ENCODE measurements at regions of chr5 and their contacts with region 1.

Region 1: DNA sequence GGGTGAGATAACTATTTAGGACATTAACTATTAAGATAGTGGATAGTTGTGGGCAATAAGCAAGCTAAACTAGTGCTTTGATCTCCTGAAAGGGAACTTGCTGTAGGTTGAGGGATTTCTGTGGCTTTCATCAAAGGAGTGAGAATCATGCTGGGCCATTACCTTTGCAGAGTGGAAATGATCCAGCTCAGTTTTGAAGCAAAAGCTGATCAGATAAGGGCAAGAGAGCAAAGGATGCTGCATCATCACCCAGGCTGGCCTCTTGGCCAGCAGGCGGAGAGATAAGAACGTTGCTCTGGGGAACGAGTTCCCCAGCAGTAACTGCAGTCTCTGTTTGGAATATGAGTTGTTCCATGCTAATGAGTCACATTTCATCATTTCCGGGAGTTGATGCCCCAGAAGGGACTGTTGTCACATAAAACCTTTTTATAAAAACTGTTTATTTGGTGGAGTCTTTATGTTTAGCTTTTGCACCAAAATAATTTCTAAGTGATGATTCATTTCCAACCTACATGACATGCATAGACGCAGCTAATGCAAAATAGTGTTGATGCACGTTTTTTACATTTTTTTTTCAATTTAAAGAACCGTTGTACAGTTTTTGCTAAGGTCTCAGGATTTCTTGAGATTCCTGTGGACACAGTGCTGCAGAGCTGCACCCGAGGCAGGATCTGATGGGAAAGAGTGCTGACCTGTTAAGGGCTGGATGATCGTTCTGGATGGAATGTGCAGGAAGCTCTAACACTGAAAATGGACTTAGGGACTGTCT is 99.3 kb downstream of the ACTBL2 start:
- DNase-seq: peak; percentile 87
- ATAC-seq: peak; percentile 95
- H3K4me3 ChIP-seq: peak overlapping the region; percentile 50; the same call in 1 of the 2 replicates
- H3K27ac ChIP-seq: peak overlapping the region; percentile 89
- H3K4me1 ChIP-seq: peaks cover 14% of the 10 kb centered on the region
- H3K27me3 ChIP-seq: no peaks in the 10 kb centered on the region
- CTCF ChIP-seq: peak; percentile 47

Region 2: GRCh38 chr5:57338068-57338892 is 45.0 kb before region 1 on chr5:
- CTCF ChIA-PET with region 1: interaction called, 5 read pairs
- POLR2A ChIA-PET with region 1: no interaction called
- intact Hi-C with region 1: loop called (anchors 1 kb)
- DNase-seq: peak; percentile 62
- ATAC-seq: peak; percentile 67
- H3K4me3 ChIP-seq: no peak overlapping the region
- H3K27ac ChIP-seq: peak overlapping the region; percentile 67
- H3K4me1 ChIP-seq: peaks cover 49% of the 10 kb centered on the region
- H3K27me3 ChIP-seq: no peaks in the 10 kb centered on the region
- CTCF ChIP-seq: peak; percentile 59

Region 3: GRCh38 chr5:57358796-57359592 is 24.3 kb before region 1 on chr5:
- CTCF ChIA-PET with region 1: no interaction called
- POLR2A ChIA-PET with region 1: no interaction called
- intact Hi-C with region 1: no loop called
- DNase-seq: no peak
- ATAC-seq: no peak
- H3K4me3 ChIP-seq: no peak overlapping the region
- H3K27ac ChIP-seq: no peak overlapping the region
- H3K4me1 ChIP-seq: no peaks in the 10 kb centered on the region
- H3K27me3 ChIP-seq: no peaks in the 10 kb centered on the region
- CTCF ChIP-seq: no peak

Region 4: GRCh38 chr5:57499262-57500050 is 116.2 kb after region 1 on chr5:
- CTCF ChIA-PET with region 1: no interaction called
- POLR2A ChIA-PET with region 1: no interaction called
- intact Hi-C with region 1: loop called (anchors 2 kb)
- DNase-seq: peak; percentile 71
- ATAC-seq: peak; percentile 41; the same call in 1 of the 2 replicates
- H3K4me3 ChIP-seq: peak overlapping the region; percentile 19; the same call in 1 of the 2 replicates
- H3K27ac ChIP-seq: no peak overlapping the region
- H3K4me1 ChIP-seq: peaks cover 35% of the 10 kb centered on the region
- H3K27me3 ChIP-seq: no peaks in the 10 kb centered on the region
- CTCF ChIP-seq: peak; percentile 77